ENCODE measurements at regions of chr2 and their contacts with region 1.

Region 1: GRCh38 chr2:26745609-26746327 is 18.3 kb upstream of the SLC35F6 start:
- ATAC-seq: peak; percentile 79 to 98 (median 95)
- H3K4me3 ChIP-seq: no peak overlapping the region
- H3K27ac ChIP-seq: no peak overlapping the region
- H3K4me1 ChIP-seq: peaks cover 12 to 14% of the 10 kb centered on the region in 2 donors

Region 2: GRCh38 chr2:26612522-26613240 is 133.1 kb before region 1 on chr2:
- in situ Hi-C with region 1: loop called in 3 of 9 experiments (anchors 10 to 25 kb)
- ATAC-seq: peak in 3 of 8 experiments; percentile 23 to 55 (median 52)
- H3K4me3 ChIP-seq: no peak overlapping the region
- H3K27ac ChIP-seq: peak overlapping the region in 1 of 2 donors; percentile 48
- H3K4me1 ChIP-seq: peaks cover 52 to 55% of the 10 kb centered on the region in 2 donors

Region 3: GRCh38 chr2:27973592-27973991 is 1227.8 kb after region 1 on chr2:
- in situ Hi-C with region 1: no loop called
- ATAC-seq: peak in 1 of 8 experiments; percentile 28
- H3K4me3 ChIP-seq: no peak overlapping the region
- H3K27ac ChIP-seq: no peak overlapping the region
- H3K4me1 ChIP-seq: no peaks in the 10 kb centered on the region

Measured in motor neuron (in vitro differentiated cells).